CD4-positive, alpha-beta T cell (primary cell): ENCODE measurements at regions of chr2 and their contacts with region 1.

Region 1: DNA sequence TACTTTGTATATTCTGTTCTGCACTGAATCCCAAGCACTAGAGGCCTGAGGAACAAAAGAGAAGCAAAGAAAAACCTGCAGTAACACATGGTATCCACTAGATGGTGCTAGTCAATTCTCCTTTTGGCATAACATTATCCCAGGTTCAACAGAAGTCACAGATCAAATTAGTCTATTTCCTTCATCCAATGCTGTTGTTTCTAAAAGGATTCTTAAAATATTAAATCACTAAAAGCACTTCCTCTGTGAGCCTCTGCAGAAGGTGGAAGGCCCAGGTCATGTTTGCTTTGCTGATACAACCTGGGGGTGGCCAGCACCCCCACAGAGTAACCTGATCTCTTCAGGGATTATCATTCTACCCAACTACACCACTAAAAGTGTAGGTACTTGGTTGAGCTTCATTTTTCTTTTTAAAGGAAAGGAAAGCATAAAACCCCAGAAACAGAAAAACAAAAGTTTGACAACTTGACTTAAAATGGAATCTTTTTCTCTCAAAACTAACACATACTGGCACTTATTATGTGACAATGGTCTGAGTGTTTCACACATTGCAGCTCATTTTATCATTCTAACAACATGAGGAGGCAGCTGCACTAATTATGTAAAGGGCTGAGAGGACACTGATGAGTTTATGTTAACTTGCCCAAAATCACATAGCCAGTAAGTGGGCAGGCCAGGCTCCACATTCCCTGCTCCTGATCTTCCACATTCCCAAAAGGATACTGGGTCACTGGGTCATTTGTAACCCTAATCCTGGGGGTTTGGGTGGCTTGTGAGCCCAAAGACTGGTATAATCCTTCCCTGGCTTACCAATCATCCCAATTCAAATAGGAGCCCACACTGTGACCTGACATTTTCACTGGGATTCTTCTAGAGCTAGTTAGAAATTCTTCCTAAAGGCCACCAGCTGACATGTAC is 66.8 kb upstream of the DNER start:
- DNase-seq: peak in 3 of 14 experiments; percentile 49 to 66 (median 54)
- ATAC-seq: peak; percentile 74
- H3K4me3 ChIP-seq: no peak overlapping the region
- H3K4me3 Mint-ChIP-seq: no peak overlapping the region
- H3K27ac ChIP-seq: no peak overlapping the region
- H3K27ac Mint-ChIP-seq: no peak overlapping the region
- H3K4me1 ChIP-seq: no peaks in the 10 kb centered on the region
- H3K4me1 Mint-ChIP-seq: peaks cover 26% of the 10 kb centered on the region
- H3K27me3 ChIP-seq: no peaks in the 10 kb centered on the region
- H3K27me3 Mint-ChIP-seq: no peaks in the 10 kb centered on the region
- CTCF ChIP-seq: peak; percentile 97

Region 2: GRCh38 chr2:229572507-229573271 is 208.4 kb before region 1 on chr2:
- CTCF ChIA-PET with region 1: no interaction called
- POLR2A ChIA-PET with region 1: no interaction called
- intact Hi-C with region 1: no loop called
- DNase-seq: no peak
- ATAC-seq: no peak
- H3K4me3 ChIP-seq: no peak overlapping the region
- H3K4me3 Mint-ChIP-seq: no peak overlapping the region
- H3K27ac ChIP-seq: no peak overlapping the region
- H3K27ac Mint-ChIP-seq: no peak overlapping the region
- H3K4me1 ChIP-seq: no peaks in the 10 kb centered on the region
- H3K4me1 Mint-ChIP-seq: no peaks in the 10 kb centered on the region
- H3K27me3 ChIP-seq: peaks cover 3 to 7% of the 10 kb centered on the region in 2 experiments
- H3K27me3 Mint-ChIP-seq: peaks cover 27% of the 10 kb centered on the region
- CTCF ChIP-seq: no peak

Region 3: DNA sequence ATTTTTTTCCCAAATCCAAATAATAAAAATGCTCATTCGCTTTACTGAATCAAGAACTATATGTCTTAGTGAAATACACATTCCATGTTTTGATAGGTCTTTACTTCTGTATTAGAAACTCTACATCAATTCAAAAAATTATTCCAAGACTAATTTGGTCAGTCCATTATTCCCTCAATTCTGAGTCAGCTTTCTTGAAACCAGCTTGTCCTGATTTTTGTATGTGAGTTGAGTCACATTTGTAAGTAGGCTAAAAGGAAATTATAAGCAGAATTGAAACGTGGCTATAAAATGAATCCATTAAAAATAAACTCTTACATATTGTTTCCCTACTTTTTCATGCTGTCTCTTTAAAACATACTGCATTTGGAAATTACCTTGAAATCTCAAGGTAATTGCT is 179.7 kb before region 1 on chr2:
- CTCF ChIA-PET with region 1: no interaction called
- POLR2A ChIA-PET with region 1: no interaction called
- intact Hi-C with region 1: no loop called
- DNase-seq: no peak
- ATAC-seq: no peak
- H3K4me3 ChIP-seq: no peak overlapping the region
- H3K4me3 Mint-ChIP-seq: no peak overlapping the region
- H3K27ac ChIP-seq: no peak overlapping the region
- H3K27ac Mint-ChIP-seq: no peak overlapping the region
- H3K4me1 ChIP-seq: no peaks in the 10 kb centered on the region
- H3K4me1 Mint-ChIP-seq: no peaks in the 10 kb centered on the region
- H3K27me3 ChIP-seq: peaks cover 0 to 6% of the 10 kb centered on the region in 2 experiments
- H3K27me3 Mint-ChIP-seq: peaks cover 20% of the 10 kb centered on the region
- CTCF ChIP-seq: no peak

Region 4: DNA sequence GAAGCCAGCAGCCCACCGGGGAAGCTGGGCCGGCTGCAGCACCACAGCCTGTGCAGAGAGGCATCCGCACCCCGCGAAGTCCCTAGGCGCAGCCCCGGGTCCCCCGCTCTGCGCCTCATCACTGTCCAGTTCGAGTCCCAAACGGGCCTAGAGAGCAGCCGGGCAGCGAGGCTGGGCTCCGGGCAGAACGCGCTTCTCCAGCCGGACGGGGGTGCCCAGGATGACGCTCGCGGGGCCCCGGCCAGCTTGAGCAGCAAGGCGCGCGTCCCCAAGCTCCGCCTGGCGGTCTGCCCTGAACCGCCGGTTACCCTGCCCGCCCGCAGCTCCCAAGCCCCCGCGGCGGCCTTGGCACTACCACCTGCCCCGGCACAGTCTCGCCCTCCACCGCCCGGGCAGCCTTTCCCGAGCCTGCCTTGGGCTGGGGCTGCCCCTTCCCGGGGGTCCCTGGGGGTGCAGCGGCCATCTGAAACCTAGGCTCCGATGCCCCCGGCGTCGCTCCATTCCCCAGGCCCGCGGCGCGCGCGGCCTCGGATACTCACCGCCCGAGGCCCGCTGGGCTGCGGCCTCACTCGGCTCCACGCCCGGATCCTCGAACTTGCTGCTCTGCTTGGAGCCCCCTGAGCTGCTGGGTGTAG is 287.0 kb after region 1 on chr2:
- CTCF ChIA-PET with region 1: no interaction called
- POLR2A ChIA-PET with region 1: no interaction called
- intact Hi-C with region 1: loop called (anchors 5 to 10 kb)
- DNase-seq: peak in 13 of 14 experiments; percentile 5 to 63 (median 30)
- ATAC-seq: peak; percentile 45
- H3K4me3 ChIP-seq: peak overlapping the region; percentile 50
- H3K4me3 Mint-ChIP-seq: peak overlapping the region; percentile 94
- H3K27ac ChIP-seq: no peak overlapping the region
- H3K27ac Mint-ChIP-seq: peak overlapping the region; percentile 69
- H3K4me1 ChIP-seq: peaks cover 17% of the 10 kb centered on the region
- H3K4me1 Mint-ChIP-seq: peaks cover 6% of the 10 kb centered on the region
- H3K27me3 ChIP-seq: peaks cover 6 to 7% of the 10 kb centered on the region in 2 experiments
- H3K27me3 Mint-ChIP-seq: peaks cover 8% of the 10 kb centered on the region
- CTCF ChIP-seq: no peak

Region 5: DNA sequence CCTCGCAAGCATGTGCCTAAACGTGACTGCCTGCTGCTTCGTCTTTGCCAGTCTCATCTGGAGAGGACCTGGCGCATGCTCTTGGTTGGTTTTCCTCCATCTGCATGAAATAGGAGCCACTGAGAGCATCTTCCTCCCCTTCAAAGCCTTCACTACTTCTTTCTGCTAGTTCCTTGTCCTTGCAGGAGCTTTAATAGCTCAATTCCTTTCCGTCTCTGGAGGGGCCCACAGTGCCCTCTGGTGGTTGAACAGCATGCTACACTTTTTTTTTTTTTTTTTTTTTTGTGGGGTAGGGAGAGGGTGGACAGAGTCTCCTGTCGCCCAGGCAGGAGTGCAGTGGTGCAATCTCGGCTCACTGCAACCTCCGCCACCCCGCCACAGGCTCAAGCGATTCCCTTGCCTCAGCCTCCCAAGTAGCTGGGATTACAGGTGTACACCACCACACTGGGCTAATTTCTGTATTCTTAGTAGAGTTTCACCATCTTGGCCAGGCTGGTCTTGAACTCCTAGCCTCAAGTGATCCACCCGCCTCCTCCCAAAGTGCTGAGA is 379.1 kb after region 1 on chr2:
- CTCF ChIA-PET with region 1: no interaction called
- POLR2A ChIA-PET with region 1: no interaction called
- intact Hi-C with region 1: loop called in 1 of 2 experiments (anchors 2 kb)
- DNase-seq: peak; percentile 21 to 73 (median 40)
- ATAC-seq: peak; percentile 48
- H3K4me3 ChIP-seq: no peak overlapping the region
- H3K4me3 Mint-ChIP-seq: no peak overlapping the region
- H3K27ac ChIP-seq: no peak overlapping the region
- H3K27ac Mint-ChIP-seq: no peak overlapping the region
- H3K4me1 ChIP-seq: peaks cover 4% of the 10 kb centered on the region
- H3K4me1 Mint-ChIP-seq: no peaks in the 10 kb centered on the region
- H3K27me3 ChIP-seq: no peaks in the 10 kb centered on the region
- H3K27me3 Mint-ChIP-seq: no peaks in the 10 kb centered on the region
- CTCF ChIP-seq: peak; percentile 93